ENCODE measurements at regions of chr18 and their contacts with region 1.

Region 1: GRCh38 chr18:79507076-79507545 is 111.4 kb downstream of the NFATC1 start:
- DNase-seq: peak; percentile 71 to 81
- ATAC-seq: peak; percentile 86 to 91 (median 86)
- H3K4me3 ChIP-seq: peak overlapping the region; percentile 73
- H3K27ac ChIP-seq: peak overlapping the region; percentile 95
- H3K4me1 ChIP-seq: peaks cover 27% of the 10 kb centered on the region
- H3K27me3 ChIP-seq: no peaks in the 10 kb centered on the region
- CTCF ChIP-seq: no peak

Region 2: GRCh38 chr18:79400091-79400590 is 107.0 kb before region 1 on chr18:
- intact Hi-C with region 1: loop called in 1 of 2 experiments (anchors 5 kb)
- DNase-seq: peak; percentile 79 to 82
- ATAC-seq: peak in 3 of 4 donors; percentile 23 to 30 (median 27)
- H3K4me3 ChIP-seq: peak overlapping the region; percentile 81
- H3K27ac ChIP-seq: peak overlapping the region; percentile 91
- H3K4me1 ChIP-seq: peaks cover 47% of the 10 kb centered on the region
- H3K27me3 ChIP-seq: no peaks in the 10 kb centered on the region
- CTCF ChIP-seq: no peak

Region 3: GRCh38 chr18:79453816-79454735 is 53.0 kb before region 1 on chr18:
- intact Hi-C with region 1: no loop called
- DNase-seq: no peak
- ATAC-seq: peak in 3 of 4 donors; percentile 43 to 59 (median 50)
- H3K4me3 ChIP-seq: no peak overlapping the region
- H3K27ac ChIP-seq: no peak overlapping the region
- H3K4me1 ChIP-seq: no peaks in the 10 kb centered on the region
- H3K27me3 ChIP-seq: no peaks in the 10 kb centered on the region
- CTCF ChIP-seq: no peak

Region 4: GRCh38 chr18:79567481-79568147 is 60.5 kb after region 1 on chr18:
- intact Hi-C with region 1: loop called in 1 of 2 experiments (anchors 10 kb)
- DNase-seq: peak; percentile 69 to 77
- ATAC-seq: peak; percentile 75 to 87 (median 86)
- H3K4me3 ChIP-seq: peak overlapping the region; percentile 47
- H3K27ac ChIP-seq: peak overlapping the region; percentile 72
- H3K4me1 ChIP-seq: peaks cover 14% of the 10 kb centered on the region
- H3K27me3 ChIP-seq: no peaks in the 10 kb centered on the region
- CTCF ChIP-seq: no peak